Caco-2 (cell line): ENCODE measurements at regions of chr4 and their contacts with region 1.

Region 1: GRCh38 chr4:79042079-79042674 is 102.9 kb upstream of the PAQR3 start:
- DNase-seq: peak in 1 of 2 experiments; percentile 31
- H3K4me3 ChIP-seq: no peak overlapping the region
- H3K4me3 Mint-ChIP-seq: no peak overlapping the region
- H3K27ac Mint-ChIP-seq: no peak overlapping the region
- H3K4me1 ChIP-seq: peaks cover 4% of the 10 kb centered on the region; the same call in 1 of the 2 replicates
- H3K4me1 Mint-ChIP-seq: peaks cover 13% of the 10 kb centered on the region
- H3K27me3 ChIP-seq: no peaks in the 10 kb centered on the region
- H3K27me3 Mint-ChIP-seq: no peaks in the 10 kb centered on the region
- CTCF ChIP-seq: peak; percentile 44 to 50

Region 2: DNA sequence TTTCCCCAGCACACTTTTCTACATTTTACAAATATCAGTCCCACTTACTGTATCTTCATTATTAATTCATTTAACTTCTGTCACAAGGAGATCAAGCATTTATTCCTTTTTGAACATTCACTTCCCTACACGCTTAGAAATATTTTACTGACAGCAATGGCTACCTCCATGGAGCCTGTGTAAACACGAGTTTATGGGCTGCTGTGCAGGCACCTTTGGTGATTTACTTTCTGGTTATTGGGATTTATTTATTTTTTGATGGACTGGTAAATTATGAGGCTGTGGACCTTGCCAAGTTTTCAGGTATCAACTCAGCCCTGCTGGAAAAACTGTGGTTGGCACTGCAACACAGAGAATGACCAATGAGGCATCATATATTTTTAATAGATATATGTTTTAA is 57.6 kb before region 1 on chr4:
- CTCF ChIA-PET with region 1: no interaction called
- POLR2A ChIA-PET with region 1: no interaction called
- intact Hi-C with region 1: no loop called
- DNase-seq: no peak
- H3K4me3 ChIP-seq: no peak overlapping the region
- H3K4me3 Mint-ChIP-seq: no peak overlapping the region
- H3K27ac Mint-ChIP-seq: no peak overlapping the region
- H3K4me1 ChIP-seq: no peaks in the 10 kb centered on the region
- H3K4me1 Mint-ChIP-seq: no peaks in the 10 kb centered on the region
- H3K27me3 ChIP-seq: no peaks in the 10 kb centered on the region
- H3K27me3 Mint-ChIP-seq: peaks cover 3% of the 10 kb centered on the region
- CTCF ChIP-seq: no peak

Region 3: GRCh38 chr4:79022529-79022928 is 19.6 kb before region 1 on chr4:
- CTCF ChIA-PET with region 1: no interaction called
- POLR2A ChIA-PET with region 1: no interaction called
- intact Hi-C with region 1: no loop called
- DNase-seq: no peak
- H3K4me3 ChIP-seq: no peak overlapping the region
- H3K4me3 Mint-ChIP-seq: no peak overlapping the region
- H3K27ac Mint-ChIP-seq: no peak overlapping the region
- H3K4me1 ChIP-seq: no peaks in the 10 kb centered on the region
- H3K4me1 Mint-ChIP-seq: peaks cover 8% of the 10 kb centered on the region
- H3K27me3 ChIP-seq: no peaks in the 10 kb centered on the region
- H3K27me3 Mint-ChIP-seq: peaks cover 7% of the 10 kb centered on the region
- CTCF ChIP-seq: no peak

Region 4: DNA sequence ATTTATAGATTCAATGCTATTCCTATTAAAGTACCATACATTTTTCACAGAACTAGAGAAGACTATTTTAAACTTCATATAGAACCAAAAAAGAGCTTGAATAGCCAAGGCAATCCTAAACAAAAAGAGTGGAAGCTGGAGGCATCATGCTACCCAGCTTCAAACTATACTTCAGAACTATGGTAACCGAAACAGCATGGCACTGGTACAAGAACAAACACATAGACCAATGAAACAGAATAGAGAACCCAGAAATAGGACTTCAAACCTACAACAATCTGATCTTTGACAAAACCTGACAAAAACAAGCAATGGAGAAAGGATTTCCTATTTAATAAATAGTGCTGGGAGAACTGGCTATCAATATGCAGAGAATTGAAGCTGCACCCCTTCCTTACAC is 31.3 kb after region 1 on chr4:
- CTCF ChIA-PET with region 1: no interaction called
- POLR2A ChIA-PET with region 1: no interaction called
- intact Hi-C with region 1: no loop called
- DNase-seq: no peak
- H3K4me3 ChIP-seq: no peak overlapping the region
- H3K4me3 Mint-ChIP-seq: no peak overlapping the region
- H3K27ac Mint-ChIP-seq: no peak overlapping the region
- H3K4me1 ChIP-seq: no peaks in the 10 kb centered on the region
- H3K4me1 Mint-ChIP-seq: no peaks in the 10 kb centered on the region
- H3K27me3 ChIP-seq: no peaks in the 10 kb centered on the region
- H3K27me3 Mint-ChIP-seq: no peaks in the 10 kb centered on the region
- CTCF ChIP-seq: no peak

Region 5: GRCh38 chr4:79296768-79297428 is 254.7 kb after region 1 on chr4:
- CTCF ChIA-PET with region 1: no interaction called
- POLR2A ChIA-PET with region 1: no interaction called
- intact Hi-C with region 1: loop called (anchors 5 kb)
- DNase-seq: no peak
- H3K4me3 ChIP-seq: no peak overlapping the region
- H3K4me3 Mint-ChIP-seq: no peak overlapping the region
- H3K27ac Mint-ChIP-seq: no peak overlapping the region
- H3K4me1 ChIP-seq: peaks cover 10% of the 10 kb centered on the region; the same call in 1 of the 2 replicates
- H3K4me1 Mint-ChIP-seq: peaks cover 4% of the 10 kb centered on the region
- H3K27me3 ChIP-seq: no peaks in the 10 kb centered on the region
- H3K27me3 Mint-ChIP-seq: no peaks in the 10 kb centered on the region
- CTCF ChIP-seq: no peak

Region 6: GRCh38 chr4:79439489-79439888 is 397.3 kb after region 1 on chr4:
- CTCF ChIA-PET with region 1: no interaction called
- POLR2A ChIA-PET with region 1: no interaction called
- intact Hi-C with region 1: no loop called
- DNase-seq: no peak
- H3K4me3 ChIP-seq: no peak overlapping the region
- H3K4me3 Mint-ChIP-seq: no peak overlapping the region
- H3K27ac Mint-ChIP-seq: no peak overlapping the region
- H3K4me1 ChIP-seq: no peaks in the 10 kb centered on the region
- H3K4me1 Mint-ChIP-seq: no peaks in the 10 kb centered on the region
- H3K27me3 ChIP-seq: no peaks in the 10 kb centered on the region
- H3K27me3 Mint-ChIP-seq: no peaks in the 10 kb centered on the region
- CTCF ChIP-seq: no peak